ENCODE measurements at regions of chr11 and their contacts with region 1.

Region 1: DNA sequence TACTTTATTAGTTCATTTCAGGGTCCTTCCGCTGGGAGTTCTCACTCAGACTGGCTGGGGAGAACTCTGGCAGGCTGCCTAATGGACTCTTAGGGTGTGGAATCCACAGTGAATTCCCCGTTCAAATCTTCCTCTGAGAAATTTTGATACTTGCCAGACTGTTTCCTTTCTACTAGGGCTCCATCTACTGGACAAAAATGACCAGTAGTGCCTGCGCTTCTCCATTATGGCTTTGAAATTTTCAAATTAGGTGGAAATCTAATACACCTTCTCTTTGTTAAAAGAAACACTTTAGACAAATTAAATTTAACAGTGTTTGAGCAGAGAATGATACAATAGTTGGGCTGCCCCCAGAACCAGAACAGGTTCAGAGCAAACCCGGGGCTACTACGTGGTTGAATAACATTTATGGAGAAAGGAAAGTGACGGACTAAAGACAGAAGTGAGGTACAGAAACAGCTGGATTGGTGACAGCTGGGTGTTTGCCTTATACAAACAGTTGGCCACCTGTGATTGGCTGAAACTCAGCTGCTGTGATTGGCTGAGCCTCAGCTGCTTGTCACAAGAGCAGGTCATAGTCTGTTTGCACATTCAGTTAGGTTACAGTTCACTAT is 52.9 kb upstream of the FDX1 start:
- DNase-seq: peak; percentile 65 to 86 (median 75)
- H3K4me3 ChIP-seq: peak overlapping the region; percentile 23 to 51 (median 38)
- H3K4me3 Mint-ChIP-seq: peak overlapping the region; percentile 59 to 80
- H3K27ac ChIP-seq: peak overlapping the region; percentile 47 to 69
- H3K27ac Mint-ChIP-seq: peak overlapping the region; percentile 76 to 92 (median 85)
- H3K4me1 ChIP-seq: peaks cover 35 to 47% of the 10 kb centered on the region in 2 donors
- H3K4me1 Mint-ChIP-seq: peaks cover 43% of the 10 kb centered on the region
- H3K27me3 ChIP-seq: no peaks in the 10 kb centered on the region
- H3K27me3 Mint-ChIP-seq: peaks cover 0 to 2% (median 0%) of the 10 kb centered on the region in 3 donors
- CTCF ChIP-seq: peak; percentile 85

Region 2: GRCh38 chr11:110200241-110200640 is 176.6 kb before region 1 on chr11:
- intact Hi-C with region 1: loop called (anchors 2 to 5 kb)
- DNase-seq: no peak
- H3K4me3 ChIP-seq: no peak overlapping the region
- H3K4me3 Mint-ChIP-seq: no peak overlapping the region
- H3K27ac ChIP-seq: no peak overlapping the region
- H3K27ac Mint-ChIP-seq: no peak overlapping the region
- H3K4me1 ChIP-seq: no peaks in the 10 kb centered on the region
- H3K4me1 Mint-ChIP-seq: peaks cover 2% of the 10 kb centered on the region
- H3K27me3 ChIP-seq: no peaks in the 10 kb centered on the region
- H3K27me3 Mint-ChIP-seq: peaks cover 0 to 3% (median 0%) of the 10 kb centered on the region in 3 donors
- CTCF ChIP-seq: no peak

Region 3: DNA sequence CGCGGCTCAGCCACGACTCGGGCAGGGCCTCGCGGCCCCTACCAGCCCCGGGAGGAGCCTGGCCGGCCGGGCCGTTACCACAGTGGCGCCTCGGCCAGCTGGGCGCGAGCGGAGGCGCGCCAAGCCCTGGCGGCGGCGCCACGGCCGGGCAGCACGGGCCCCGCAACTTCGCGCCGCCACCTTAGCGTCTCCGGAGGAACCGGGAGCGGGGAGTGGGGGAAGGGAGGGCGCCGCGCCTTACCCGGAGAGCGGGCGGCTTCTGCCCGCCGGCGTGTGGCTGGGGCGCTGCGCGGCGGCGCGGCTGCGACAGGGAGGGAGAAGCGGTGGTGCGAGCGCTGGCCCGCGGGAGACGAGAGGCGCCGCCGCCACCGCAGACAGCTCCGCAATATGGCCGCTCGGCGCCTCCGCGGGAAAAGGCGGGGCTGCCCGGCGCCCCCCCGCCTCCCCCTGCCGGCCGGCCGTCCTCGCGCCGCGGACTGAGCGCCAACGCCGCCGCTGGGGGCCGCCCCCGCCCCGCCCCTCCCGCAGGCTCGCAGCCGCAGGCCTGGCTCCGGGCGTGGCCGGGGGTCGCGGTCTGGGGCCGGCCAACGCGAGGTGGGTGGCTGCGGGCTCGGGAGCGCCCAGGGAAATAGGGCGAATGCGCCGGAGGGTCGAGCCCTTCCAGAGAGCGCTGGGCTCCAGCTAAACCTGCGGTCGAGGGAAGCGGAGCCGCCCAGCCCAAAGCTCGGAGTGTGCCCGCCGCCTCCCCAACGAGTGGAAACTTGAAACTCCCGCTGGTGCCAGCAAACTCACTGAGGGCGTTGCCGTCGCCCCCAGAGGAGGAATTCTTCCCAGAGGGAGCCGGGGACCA is 80.4 kb before region 1 on chr11 and contains the start of gene RDX:
- intact Hi-C with region 1: loop called (anchors 5 kb)
- DNase-seq: peak; percentile 51 to 72 (median 69)
- H3K4me3 ChIP-seq: peak within 1 kb of the TSS; percentile 67 to 89 (median 82)
- H3K4me3 Mint-ChIP-seq: peak within 1 kb of the TSS; percentile 88 to 93
- H3K27ac ChIP-seq: peak within 1 kb of the TSS; percentile 70 to 85
- H3K27ac Mint-ChIP-seq: peak within 1 kb of the TSS; percentile 72 to 92 (median 86)
- H3K4me1 ChIP-seq: peaks cover 36 to 37% of the 10 kb centered on the region in 2 donors
- H3K4me1 Mint-ChIP-seq: peaks cover 33% of the 10 kb centered on the region
- H3K27me3 ChIP-seq: no peaks in the 10 kb centered on the region
- H3K27me3 Mint-ChIP-seq: peaks cover 0 to 5% (median 3%) of the 10 kb centered on the region in 3 donors
- CTCF ChIP-seq: no peak
- polyA plus RNA-seq, gene RDX: 11.9 to 22.0 (median 20.9) TPM